ENCODE measurements at regions of chr4 and their contacts with region 1.

Region 1: DNA sequence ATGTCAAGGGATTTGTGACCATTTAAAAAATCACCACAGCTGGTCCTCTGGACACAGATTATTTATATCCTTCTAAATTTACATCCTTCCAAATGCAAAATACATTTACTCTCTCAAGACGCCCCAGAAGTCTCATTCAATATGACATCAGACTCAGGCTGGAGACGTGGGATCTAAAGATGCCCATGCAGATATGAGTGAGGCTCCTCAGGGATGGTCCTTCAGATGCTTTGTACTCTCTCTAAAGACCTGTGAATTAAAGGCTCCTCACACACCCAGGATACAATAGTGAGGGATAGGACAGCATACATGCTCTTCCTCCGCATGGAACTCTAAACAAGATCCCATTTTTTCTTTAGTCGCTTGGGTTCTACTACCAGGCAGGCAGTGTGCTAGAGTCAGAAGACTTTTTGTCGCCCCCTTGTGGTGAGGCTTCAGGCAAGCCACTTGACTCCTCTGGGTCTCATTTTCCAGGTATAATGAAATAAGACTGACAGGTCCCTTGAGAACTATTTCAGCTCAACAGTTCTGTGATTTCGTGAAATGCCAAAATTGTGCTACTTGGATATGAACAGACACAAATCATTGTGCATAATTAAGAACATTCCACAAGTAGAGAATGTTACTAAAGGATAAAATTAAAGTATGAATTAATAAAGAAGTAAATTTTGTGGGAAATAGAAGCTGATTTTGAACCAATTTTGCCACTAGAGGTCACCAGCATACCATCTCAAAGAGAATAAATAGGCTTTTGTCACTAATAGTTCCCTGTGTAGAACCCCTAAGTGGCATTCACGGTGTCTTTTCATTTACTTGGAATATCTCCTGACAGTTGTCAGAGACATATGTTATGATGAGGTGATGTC is 13.7 kb upstream of the SCOC start:
- DNase-seq: peak; percentile 82
- ATAC-seq: peak; percentile 93
- H3K4me3 Mint-ChIP-seq: no peak overlapping the region
- H3K27ac Mint-ChIP-seq: no peak overlapping the region
- H3K4me1 Mint-ChIP-seq: no peaks in the 10 kb centered on the region
- H3K27me3 Mint-ChIP-seq: peaks cover 7% of the 10 kb centered on the region

Region 2: GRCh38 chr4:140373328-140374129 is 13.7 kb after region 1 on chr4 and contains the start of gene SCOC:
- CTCF ChIA-PET with region 1: interaction called, 38 read pairs
- DNase-seq: peak; percentile 99
- ATAC-seq: peak; percentile 97
- H3K4me3 Mint-ChIP-seq: no peak within 1 kb of the TSS
- H3K27ac Mint-ChIP-seq: peak within 1 kb of the TSS; percentile 45
- H3K4me1 Mint-ChIP-seq: peaks cover 24% of the 10 kb centered on the region
- H3K27me3 Mint-ChIP-seq: no peaks in the 10 kb centered on the region
- total RNA-seq, gene SCOC: 22.3 to 26.6 TPM

Region 3: DNA sequence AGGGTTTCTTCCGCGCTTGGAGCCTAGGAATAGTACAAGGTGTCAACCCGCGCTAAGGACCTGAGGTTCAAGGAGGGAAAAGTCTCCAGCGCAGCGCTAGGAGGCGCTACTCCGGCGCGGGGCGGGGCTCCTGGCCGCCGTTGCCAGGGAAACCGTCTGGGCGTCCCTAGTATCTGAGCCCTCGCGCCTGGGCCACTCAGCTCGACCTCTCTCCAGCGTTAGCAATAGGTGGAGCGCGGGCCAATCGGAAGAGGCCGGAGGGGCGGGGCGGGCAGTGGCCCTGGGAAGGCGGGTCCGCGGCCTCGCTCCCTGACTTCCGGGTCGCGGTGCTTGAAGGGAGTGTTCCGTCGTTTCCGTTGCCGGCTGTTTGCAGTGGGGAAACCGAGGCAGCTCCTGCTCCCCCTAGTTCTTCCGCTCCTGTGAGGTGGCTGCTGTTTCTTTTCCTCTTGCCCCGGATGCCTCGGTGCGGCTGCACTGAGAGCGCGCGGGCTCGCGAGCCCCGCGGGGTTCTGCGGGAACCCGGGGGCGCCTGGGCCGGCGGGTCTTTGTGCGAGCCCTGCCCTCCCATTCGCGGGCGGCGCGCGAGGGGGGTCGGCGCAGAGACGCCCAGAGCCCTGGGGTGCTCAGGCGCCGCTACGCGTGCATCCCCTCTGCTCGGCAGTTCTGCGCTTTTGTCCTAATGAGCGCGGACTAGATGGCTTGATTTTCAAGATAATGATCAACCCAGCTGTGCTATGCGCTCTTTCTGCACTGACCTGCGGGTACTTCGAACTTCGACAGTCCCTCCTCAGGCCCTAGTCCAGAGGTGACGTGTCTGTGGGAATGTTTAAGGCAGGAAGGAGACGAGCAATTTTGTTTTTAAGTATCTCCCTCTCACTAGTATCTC is 164.3 kb after region 1 on chr4 and contains the start of gene ELMOD2:
- CTCF ChIA-PET with region 1: interaction called, 11 read pairs
- DNase-seq: peak; percentile 98
- ATAC-seq: peak; percentile 100
- H3K4me3 Mint-ChIP-seq: peak within 1 kb of the TSS; percentile 90
- H3K27ac Mint-ChIP-seq: peak within 1 kb of the TSS; percentile 77
- H3K4me1 Mint-ChIP-seq: peaks cover 19% of the 10 kb centered on the region
- H3K27me3 Mint-ChIP-seq: no peaks in the 10 kb centered on the region
- total RNA-seq, gene ELMOD2: 12.7 to 15.1 TPM

Region 4: GRCh38 chr4:140609548-140610425 is 250.0 kb after region 1 on chr4:
- CTCF ChIA-PET with region 1: interaction called, 19 read pairs
- DNase-seq: no peak
- ATAC-seq: no peak
- H3K4me3 Mint-ChIP-seq: no peak overlapping the region
- H3K27ac Mint-ChIP-seq: no peak overlapping the region
- H3K4me1 Mint-ChIP-seq: no peaks in the 10 kb centered on the region
- H3K27me3 Mint-ChIP-seq: peaks cover 15% of the 10 kb centered on the region

Measured in activated CD8-positive, alpha-beta memory T cell treated with anti-CD3 and anti-CD28 coated beads, Interleukin-2, amount 10 ng/mL, durations not matched to agents 7 days and 5 days (primary cell).